ENCODE measurements at regions of chr5 and their contacts with region 1.

Region 1: DNA sequence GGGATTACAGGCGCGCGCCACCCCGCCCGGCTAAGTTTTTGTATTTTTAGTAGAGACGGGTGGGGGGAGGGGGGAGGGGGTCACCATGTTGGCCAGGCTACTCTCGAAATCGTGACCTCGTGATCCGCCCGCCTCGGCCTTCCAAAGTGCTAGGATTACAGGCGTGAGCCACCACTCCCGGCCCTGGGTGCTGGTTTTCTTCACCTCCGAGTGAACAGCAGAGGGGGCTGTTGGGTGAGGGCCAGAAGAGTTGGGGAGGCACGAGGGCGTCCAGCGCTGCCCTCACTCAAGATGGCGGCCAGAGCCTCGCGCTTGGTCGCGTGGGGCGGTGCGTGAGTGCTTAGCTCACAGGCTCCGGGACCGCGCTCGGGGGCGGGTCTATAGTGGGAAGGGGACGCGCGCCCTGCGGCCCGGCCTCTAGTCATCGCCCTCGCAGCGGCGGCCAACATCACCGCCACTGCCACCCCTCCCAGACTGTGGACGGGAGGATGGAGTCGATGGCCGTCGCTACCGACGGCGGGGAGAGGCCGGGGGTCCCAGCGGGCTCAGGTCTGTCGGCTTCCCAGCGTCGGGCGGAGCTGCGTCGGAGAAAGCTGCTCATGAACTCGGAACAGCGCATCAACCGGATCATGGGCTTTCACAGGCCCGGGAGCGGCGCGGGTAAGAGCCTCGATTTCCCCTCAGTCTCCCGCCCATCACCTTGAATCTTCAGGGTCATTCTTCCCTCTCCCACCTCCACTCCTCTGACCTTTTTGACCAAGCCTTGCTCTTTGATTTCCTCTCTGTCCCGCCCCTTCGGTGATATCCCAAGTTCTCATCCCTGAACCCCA is at the start of gene CAMLG:
- DNase-seq: peak; percentile 96 to 99 (median 97)
- H3K4me3 ChIP-seq: peak within 1 kb of the TSS; percentile 63 to 100 (median 94)
- H3K27ac ChIP-seq: peak within 1 kb of the TSS; percentile 78 to 98 (median 95)
- H3K27me3 ChIP-seq: no peaks in the 10 kb centered on the region
- CTCF ChIP-seq: peak in 50 of 56 donors; percentile 10 to 76 (median 47)
- total RNA-seq, gene CAMLG: 23.1 to 93.4 (median 48.1) TPM

Region 2: DNA sequence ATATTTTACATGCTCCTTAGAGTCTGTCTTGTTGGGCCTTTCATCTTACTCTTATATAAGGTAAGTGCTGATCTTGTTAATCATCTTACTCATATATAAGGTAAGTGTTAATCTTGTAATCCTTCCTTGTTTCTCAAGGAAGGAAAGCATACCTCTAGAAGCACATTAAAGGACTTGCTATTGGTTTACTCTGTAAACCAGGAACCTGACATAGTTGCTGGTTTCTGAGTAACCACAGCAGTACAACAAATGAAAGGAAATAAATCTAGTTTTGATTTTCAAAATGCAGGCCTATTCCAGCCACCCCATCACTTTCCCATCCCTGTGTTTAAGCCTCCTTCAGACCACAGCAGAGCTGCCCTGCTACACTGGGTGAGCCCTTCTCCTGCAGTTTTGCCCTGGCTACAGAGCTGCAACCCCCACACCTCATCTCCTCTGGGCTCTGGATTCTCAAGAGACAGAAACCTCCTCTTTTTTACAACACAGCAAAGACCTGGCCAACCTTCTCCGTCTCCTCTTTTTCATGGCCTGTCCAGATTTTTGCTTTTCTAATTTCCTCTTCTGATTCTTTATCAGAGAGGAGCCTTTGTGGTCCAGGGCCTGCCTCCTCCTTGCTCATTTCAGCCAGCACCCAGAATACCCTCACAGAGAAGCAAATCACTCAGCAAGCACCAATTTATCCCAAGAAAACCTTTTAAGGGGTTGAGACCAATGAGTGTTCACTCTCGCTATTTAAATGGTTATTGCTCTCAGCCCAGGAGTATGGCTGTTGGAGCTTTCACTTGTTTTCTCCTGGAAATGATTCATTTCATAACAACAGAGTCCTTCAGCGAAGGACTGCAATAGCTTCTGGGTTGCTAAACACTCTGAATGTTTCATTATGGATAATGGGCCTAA is 1229.3 kb before region 1 on chr5:
- intact Hi-C with region 1: no loop called
- DNase-seq: no peak
- H3K4me3 ChIP-seq: no peak overlapping the region
- H3K27ac ChIP-seq: peak overlapping the region in 51 of 59 donors; percentile 2 to 84 (median 53)
- H3K27me3 ChIP-seq: no peaks in the 10 kb centered on the region
- CTCF ChIP-seq: no peak

Region 3: GRCh38 chr5:134365604-134366003 is 372.7 kb before region 1 on chr5:
- intact Hi-C with region 1: loop called (anchors 5 kb)
- DNase-seq: no peak
- H3K4me3 ChIP-seq: peak overlapping the region in 1 of 59 donors; percentile 93
- H3K27ac ChIP-seq: no peak overlapping the region
- H3K27me3 ChIP-seq: no peaks in the 10 kb centered on the region
- CTCF ChIP-seq: no peak

Region 4: DNA sequence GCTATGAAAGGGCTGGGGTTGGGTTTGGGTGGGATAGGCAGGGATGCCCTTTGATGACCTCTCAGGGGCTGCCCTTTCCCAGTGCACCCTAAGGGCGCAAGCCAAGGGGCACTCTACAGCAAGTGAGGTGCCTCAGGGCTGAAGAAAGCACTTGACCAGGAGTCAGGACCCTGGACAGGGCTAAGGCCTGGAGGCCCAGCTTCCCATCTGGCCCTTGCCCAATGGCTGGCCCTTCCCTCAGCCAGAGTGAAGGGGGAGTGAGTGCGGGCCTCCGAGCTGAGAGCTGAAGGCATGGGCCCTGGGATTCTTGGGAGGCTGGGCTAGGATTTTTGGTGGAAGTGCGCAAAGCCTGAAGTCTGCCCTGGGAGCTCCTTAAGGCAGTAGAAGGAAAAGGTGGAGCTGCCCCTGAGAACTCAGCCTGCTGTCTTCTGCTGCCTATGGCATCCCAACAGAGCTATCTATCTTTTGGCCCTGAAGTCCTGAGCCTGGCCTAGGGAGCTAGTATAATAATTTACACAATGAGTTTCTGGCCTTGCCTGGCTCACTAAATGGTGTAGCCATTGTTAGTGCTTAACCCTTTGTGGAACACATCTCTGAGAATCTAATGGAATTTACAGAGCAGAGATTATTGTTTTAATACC is 196.5 kb before region 1 on chr5:
- intact Hi-C with region 1: no loop called
- DNase-seq: no peak
- H3K4me3 ChIP-seq: no peak overlapping the region
- H3K27ac ChIP-seq: no peak overlapping the region
- H3K27me3 ChIP-seq: no peaks in the 10 kb centered on the region
- CTCF ChIP-seq: no peak

Region 5: GRCh38 chr5:134648425-134649162 is 89.8 kb before region 1 on chr5 and contains the start of gene SEC24A:
- intact Hi-C with region 1: loop called (anchors 2 to 5 kb)
- DNase-seq: peak; percentile 68 to 90 (median 81)
- H3K4me3 ChIP-seq: peak within 1 kb of the TSS; percentile 65 to 100 (median 95)
- H3K27ac ChIP-seq: peak within 1 kb of the TSS in 58 of 59 donors; percentile 53 to 97 (median 90)
- H3K27me3 ChIP-seq: no peaks in the 10 kb centered on the region
- CTCF ChIP-seq: peak in 22 of 56 donors; percentile 12 to 55 (median 26)
- total RNA-seq, gene SEC24A: 11.7 to 20.2 (median 15.4) TPM

Region 6: DNA sequence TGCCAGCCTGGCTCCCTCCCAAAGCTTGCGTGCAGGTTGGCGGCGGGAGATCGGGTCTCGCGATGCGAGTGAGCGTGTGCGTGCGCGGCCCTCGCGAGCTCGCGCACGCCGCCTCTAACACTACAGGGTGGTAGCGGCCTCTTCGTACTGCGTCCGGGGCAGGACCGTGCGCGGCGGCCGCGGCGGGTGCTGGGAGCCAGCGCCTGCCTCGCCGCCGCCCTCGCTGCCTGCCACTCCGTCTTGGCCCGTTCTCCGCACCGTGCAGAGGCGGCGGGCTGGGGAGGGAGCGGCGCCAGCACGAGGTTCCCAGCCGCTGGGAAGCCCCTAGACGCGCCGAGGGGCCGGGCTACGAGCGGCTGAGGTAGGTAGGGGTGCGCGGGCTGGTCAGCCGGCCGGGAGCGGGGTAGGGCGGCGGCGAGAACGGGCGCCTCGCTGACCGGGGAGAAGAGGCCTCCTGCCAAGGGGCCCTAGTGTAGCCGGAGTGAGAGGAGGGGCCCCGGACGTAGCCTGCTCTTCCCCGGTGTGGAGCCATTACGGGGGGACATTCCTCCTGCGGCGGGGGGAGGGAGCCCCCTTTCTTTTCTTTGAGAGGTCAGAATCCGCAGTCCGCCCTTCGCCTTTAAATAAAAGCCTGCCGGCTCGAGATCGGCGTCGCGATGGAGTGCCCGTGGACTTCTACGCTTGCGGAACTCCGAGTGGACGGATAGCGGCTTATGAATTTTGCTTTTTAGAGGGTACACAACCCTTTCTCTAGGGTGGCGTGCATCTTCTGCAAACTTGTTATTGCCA is 107.7 kb after region 1 on chr5 and contains the start of gene C5orf24:
- intact Hi-C with region 1: loop called in 1 of 2 experiments (anchors 5 kb)
- DNase-seq: peak; percentile 89 to 96 (median 94)
- H3K4me3 ChIP-seq: peak within 1 kb of the TSS; percentile 61 to 99 (median 92)
- H3K27ac ChIP-seq: peak within 1 kb of the TSS; percentile 74 to 98 (median 95)
- H3K27me3 ChIP-seq: no peaks in the 10 kb centered on the region
- CTCF ChIP-seq: peak in 38 of 56 donors; percentile 11 to 64 (median 33)
- total RNA-seq, gene C5orf24: 38.2 to 79.3 (median 56.7) TPM

Region 7: DNA sequence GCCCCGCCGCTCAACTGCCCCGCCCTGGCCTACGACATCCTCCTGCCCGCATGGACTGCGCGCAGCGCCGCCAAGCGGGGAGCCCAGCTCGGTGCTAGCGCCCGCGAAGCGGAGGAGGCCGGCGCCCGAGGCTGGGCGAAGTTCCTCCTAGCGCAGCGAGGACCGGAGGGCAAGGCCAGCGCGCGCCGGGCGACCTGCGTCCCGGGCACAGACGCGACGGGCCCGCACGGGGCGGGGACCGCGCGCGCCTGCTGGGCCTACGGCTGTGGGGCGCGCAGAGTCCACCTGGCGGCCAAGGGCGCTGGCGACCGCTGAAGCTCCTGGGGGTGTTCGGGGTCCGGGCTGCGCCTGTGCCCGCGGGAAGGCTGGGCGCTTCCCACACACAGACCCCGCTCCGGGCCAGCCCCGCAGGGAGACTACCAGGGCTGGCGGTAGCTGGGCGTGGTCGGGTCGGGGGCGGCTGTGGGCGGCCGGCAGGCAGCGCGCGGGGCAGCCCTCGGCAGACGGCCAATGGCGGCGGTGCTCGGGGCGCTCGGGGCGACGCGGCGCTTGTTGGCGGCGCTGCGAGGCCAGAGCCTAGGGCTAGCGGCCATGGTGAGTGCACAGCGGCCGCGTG is 166.4 kb after region 1 on chr5 and contains the start of gene PCBD2:
- intact Hi-C with region 1: loop called (anchors 2 kb)
- DNase-seq: peak; percentile 76 to 92 (median 84)
- H3K4me3 ChIP-seq: peak within 1 kb of the TSS; percentile 44 to 94 (median 82)
- H3K27ac ChIP-seq: peak within 1 kb of the TSS; percentile 79 to 99 (median 96)
- H3K27me3 ChIP-seq: no peaks in the 10 kb centered on the region
- CTCF ChIP-seq: peak; percentile 43 to 94 (median 80)
- total RNA-seq, gene PCBD2: 5.3 to 19.3 (median 9.8) TPM

Measured in dorsolateral prefrontal cortex (tissue), 120 donors.